Stomach (tissue), 19 donors: ENCODE measurements at regions of chr1 and their contacts with region 1.

Region 1: DNA sequence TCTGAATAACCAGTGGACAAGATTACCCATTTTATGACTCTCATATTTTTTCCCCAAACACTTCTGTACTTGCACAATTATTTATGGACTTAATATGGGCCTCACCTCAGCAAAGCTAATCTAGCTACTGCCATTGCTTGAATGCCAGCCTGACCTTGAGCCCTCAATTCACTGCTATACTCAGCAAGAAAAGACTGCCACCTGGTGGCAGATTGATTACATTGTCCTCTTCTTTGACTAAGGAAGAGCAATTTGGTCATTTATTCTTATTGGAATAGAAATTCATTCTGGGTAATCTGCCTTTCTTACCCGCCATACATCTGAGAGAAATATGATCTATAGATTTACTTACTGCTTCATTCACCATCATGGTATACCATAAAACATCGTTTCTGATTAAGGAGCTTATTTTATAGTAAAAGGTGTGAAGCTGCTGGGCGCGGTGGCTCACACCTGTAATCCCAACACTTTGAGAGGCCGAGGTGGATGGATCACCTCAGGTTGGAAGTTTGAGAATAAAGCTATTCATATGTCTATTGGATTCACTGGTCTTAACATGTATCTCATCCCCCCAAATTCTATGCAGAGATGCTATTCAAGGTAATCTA is 32.9 kb upstream of the DIPK1A start:
- DNase-seq: peak; percentile 82 to 95
- H3K4me3 ChIP-seq: no peak overlapping the region
- H3K27ac ChIP-seq: peak overlapping the region in 3 of 5 donors; percentile 68 to 85 (median 81)
- H3K4me1 ChIP-seq: peaks cover 0 to 18% (median 14%) of the 10 kb centered on the region in 4 donors
- H3K27me3 ChIP-seq: no peaks in the 10 kb centered on the region
- CTCF ChIP-seq: peak in 5 of 7 experiments; percentile 59 to 93 (median 81)
- EP300 ChIP-seq: no peak
- POLR2A ChIP-seq: no peak

Region 2: GRCh38 chr1:92858564-92859399 is 135.4 kb before region 1 on chr1:
- intact Hi-C with region 1: loop called (anchors 5 kb)
- DNase-seq: peak; percentile 48 to 90
- H3K4me3 ChIP-seq: peak overlapping the region in 3 of 4 donors; percentile 17 to 25 (median 25)
- H3K27ac ChIP-seq: peak overlapping the region in 3 of 5 donors; percentile 20 to 55 (median 40)
- H3K4me1 ChIP-seq: peaks cover 0 to 24% (median 0%) of the 10 kb centered on the region in 4 donors
- H3K27me3 ChIP-seq: no peaks in the 10 kb centered on the region
- CTCF ChIP-seq: peak in 6 of 7 experiments; percentile 86 to 99 (median 92)
- EP300 ChIP-seq: no peak
- POLR2A ChIP-seq: no peak

Region 3: DNA sequence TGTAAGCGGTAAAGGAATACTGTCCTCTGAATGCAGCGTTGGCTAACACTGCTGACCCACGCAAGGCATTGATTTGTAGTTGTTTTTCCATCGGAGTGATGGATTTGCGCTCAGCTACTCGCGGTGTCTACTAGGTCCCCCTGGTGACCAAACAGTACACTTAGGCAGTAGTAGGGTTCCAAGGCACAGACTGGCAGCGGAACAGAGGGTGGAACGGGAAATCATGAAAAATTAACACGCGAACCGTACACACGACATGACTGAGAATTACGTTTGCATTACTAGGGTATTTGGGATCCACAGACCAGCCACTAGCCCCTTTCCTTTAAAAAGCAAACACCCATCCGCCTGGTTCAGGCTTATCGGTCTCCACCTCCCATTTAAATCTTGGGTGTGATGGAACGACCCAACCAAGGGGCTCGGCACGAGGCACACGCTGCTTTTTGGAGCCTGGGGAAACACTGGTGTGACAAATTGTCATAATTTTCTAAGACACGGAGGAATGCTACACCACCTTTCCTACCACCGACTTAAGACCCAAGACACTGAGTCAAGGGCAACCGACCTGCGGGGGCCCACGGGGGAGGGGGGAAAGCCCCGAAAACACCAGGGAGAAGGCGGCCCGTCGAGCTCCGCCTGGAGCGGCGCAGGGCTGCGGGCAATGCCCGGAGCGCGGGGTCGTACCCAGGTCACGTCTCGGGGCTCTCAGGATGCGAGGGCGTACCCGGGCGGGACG is 33.6 kb before region 1 on chr1:
- intact Hi-C with region 1: loop called (anchors 5 kb)
- DNase-seq: peak; percentile 68 to 93
- H3K4me3 ChIP-seq: peak overlapping the region; percentile 78 to 93 (median 88)
- H3K27ac ChIP-seq: peak overlapping the region; percentile 96 to 99 (median 98)
- H3K4me1 ChIP-seq: peaks cover 6 to 58% (median 30%) of the 10 kb centered on the region in 4 donors
- H3K27me3 ChIP-seq: no peaks in the 10 kb centered on the region
- CTCF ChIP-seq: peak in 5 of 7 experiments; percentile 41 to 85 (median 51)
- EP300 ChIP-seq: no peak
- POLR2A ChIP-seq: no peak

Region 4: DNA sequence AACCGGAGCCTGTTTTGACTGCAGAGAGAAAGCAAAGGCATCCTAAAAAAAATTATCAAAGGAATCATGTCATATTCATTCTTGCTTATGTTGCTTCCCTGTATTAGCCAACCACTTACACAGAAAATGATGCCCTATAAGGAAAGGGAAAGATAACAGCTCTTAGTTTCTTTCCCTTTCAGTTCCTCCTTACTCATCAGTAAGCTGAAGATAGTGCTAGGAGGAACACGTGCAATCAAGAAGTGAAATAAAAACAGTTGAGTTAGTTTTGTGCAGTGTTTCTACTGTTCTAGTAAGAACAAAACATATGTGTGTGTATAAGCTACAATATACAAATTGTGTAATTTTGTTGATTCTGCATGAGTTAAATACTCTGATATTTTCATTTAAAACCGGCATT is 39.6 kb after region 1 on chr1:
- intact Hi-C with region 1: no loop called
- DNase-seq: no peak
- H3K4me3 ChIP-seq: no peak overlapping the region
- H3K27ac ChIP-seq: no peak overlapping the region
- H3K4me1 ChIP-seq: no peaks in the 10 kb centered on the region
- H3K27me3 ChIP-seq: no peaks in the 10 kb centered on the region
- CTCF ChIP-seq: no peak
- EP300 ChIP-seq: no peak
- POLR2A ChIP-seq: no peak